Ovary (tissue), 10 donors: ENCODE measurements at regions of chr15 and their contacts with region 1.

Region 1: DNA sequence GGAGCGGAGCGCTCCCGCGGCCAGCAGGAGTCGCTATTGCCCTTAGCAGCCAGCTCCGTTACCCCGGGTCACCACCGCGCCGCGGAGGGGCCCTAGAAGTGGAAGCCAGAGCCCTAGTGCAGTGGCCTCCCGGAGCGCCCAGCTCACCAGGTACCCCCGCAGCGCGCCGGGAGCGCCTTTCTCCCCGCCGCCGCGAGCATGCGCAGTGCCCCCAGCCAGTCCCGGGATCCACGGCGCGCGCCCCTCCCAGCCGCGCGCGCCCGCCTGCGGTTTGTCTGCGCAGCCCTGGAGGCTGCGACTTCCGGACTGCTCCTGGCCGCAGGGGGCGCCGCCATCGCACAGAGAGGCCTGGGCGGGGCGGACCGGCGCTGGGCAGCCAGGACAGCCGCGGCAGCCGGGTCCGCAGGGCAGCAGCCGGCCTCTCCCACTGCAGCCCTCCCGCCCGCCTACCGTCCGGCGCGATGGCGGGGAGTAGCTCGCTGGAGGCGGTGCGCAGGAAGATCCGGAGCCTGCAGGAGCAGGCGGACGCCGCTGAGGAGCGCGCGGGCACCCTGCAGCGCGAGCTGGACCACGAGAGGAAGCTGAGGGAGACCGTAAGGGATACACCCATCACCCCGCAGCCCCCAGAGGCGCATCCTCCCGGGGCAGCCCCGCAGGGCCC is 5.7 kb downstream of the TPM1 start:
- DNase-seq: peak; percentile 93 to 97 (median 95)
- H3K4me3 ChIP-seq: peak overlapping the region; percentile 93
- H3K27ac ChIP-seq: peak overlapping the region; percentile 41 to 85
- H3K4me1 ChIP-seq: peaks cover 16% of the 10 kb centered on the region
- H3K27me3 ChIP-seq: no peaks in the 10 kb centered on the region
- CTCF ChIP-seq: peak; percentile 79 to 99 (median 98)
- EP300 ChIP-seq: no peak
- POLR2A ChIP-seq: peak; percentile 37

Region 2: GRCh38 chr15:62847900-62848489 is 200.2 kb before region 1 on chr15:
- intact Hi-C with region 1: loop called in 2 of 4 experiments (anchors 5 to 10 kb)
- DNase-seq: peak; percentile 69 to 81 (median 77)
- H3K4me3 ChIP-seq: no peak overlapping the region
- H3K27ac ChIP-seq: no peak overlapping the region
- H3K4me1 ChIP-seq: no peaks in the 10 kb centered on the region
- H3K27me3 ChIP-seq: no peaks in the 10 kb centered on the region
- CTCF ChIP-seq: peak in 2 of 3 donors; percentile 41 to 58
- EP300 ChIP-seq: no peak
- POLR2A ChIP-seq: no peak

Region 3: GRCh38 chr15:62879770-62880169 is 168.5 kb before region 1 on chr15:
- intact Hi-C with region 1: loop called in 1 of 4 experiments (anchors 10 kb)
- DNase-seq: no peak
- H3K4me3 ChIP-seq: no peak overlapping the region
- H3K27ac ChIP-seq: no peak overlapping the region
- H3K4me1 ChIP-seq: peaks cover 8% of the 10 kb centered on the region
- H3K27me3 ChIP-seq: no peaks in the 10 kb centered on the region
- CTCF ChIP-seq: no peak
- EP300 ChIP-seq: no peak
- POLR2A ChIP-seq: no peak

Region 4: DNA sequence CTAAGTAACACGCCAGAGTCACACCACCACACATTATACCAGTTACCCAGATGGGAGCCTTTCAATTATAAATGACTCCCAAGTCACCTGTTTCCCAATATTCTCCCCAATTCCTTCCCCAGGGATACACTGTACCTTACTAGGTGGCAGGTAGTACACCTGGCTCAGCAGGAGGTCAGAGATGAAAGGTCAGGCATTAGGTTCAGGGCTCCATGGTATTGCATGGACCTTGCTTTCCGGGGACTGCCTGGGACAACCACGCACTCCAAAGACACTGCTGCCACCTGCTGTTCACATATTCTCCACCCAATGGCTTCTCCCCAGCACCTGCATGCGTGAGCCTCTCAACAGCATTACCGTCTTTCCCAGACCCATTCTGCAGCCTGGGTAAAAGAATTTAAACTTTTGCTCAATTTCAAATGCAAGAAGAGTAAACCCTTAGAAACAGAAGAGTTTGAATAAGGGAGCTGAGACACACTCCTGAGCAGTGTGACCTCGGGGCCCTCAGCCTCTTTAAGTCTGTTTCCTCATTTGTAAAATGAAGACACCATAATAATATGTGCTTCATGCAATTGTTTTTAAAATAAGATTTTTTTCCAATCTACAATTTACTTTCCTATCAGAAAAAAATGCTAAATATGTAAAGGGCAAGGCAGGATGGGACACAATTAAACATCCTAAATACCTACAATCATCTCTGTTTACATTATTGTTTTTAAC is 45.4 kb after region 1 on chr15:
- intact Hi-C with region 1: loop called (anchors 5 kb)
- DNase-seq: peak; percentile 82 to 87 (median 86)
- H3K4me3 ChIP-seq: no peak overlapping the region
- H3K27ac ChIP-seq: no peak overlapping the region
- H3K4me1 ChIP-seq: no peaks in the 10 kb centered on the region
- H3K27me3 ChIP-seq: no peaks in the 10 kb centered on the region
- CTCF ChIP-seq: peak; percentile 71 to 91 (median 86)
- EP300 ChIP-seq: no peak
- POLR2A ChIP-seq: no peak

Region 5: DNA sequence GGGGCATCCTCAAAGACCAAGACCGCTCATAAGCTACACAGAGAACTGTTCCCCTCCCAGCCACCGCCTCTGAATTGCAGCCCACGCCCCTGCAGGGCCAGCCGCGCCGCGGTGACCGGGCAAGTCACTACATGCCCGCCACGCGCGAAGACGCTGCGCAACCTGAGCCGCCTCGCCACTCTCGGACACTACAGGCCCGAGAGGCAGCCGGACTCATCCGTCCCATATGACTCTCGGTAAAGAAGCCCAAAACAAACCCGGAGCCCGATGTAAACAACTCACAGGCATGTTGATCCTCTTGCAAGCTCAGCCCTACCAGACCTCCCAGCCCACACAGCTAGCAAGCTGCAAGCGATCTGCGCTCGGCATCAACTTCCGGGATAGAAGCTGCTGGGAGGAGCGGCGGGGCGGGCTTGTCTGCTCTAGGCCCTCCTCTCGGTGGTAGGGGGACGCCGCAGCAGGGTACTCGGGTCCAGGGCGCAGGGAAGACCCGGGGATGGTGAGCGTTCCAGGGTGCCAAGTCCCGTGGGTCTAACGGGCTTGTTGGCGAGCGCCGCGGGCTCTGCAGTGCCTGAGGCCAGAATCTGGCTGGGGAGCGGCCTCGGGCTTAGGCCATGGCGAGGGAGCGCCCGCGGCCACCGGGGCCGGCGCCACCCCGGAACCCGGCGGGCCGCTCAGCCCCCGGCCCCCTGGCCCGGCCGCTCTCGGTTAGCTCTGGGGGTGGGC is 109.0 kb after region 1 on chr15 and contains the start of gene RPS27L:
- intact Hi-C with region 1: loop called in 1 of 4 experiments (anchors 10 kb)
- DNase-seq: peak; percentile 88 to 91 (median 89)
- H3K4me3 ChIP-seq: peak within 1 kb of the TSS; percentile 97
- H3K27ac ChIP-seq: peak within 1 kb of the TSS; percentile 37 to 96
- H3K4me1 ChIP-seq: peaks cover 2% of the 10 kb centered on the region
- H3K27me3 ChIP-seq: no peaks in the 10 kb centered on the region
- CTCF ChIP-seq: peak in 1 of 3 donors; percentile 10
- EP300 ChIP-seq: no peak
- POLR2A ChIP-seq: peak; percentile 69
- total RNA-seq, gene RPS27L: 85.5 to 129 (median 95.0) TPM

Region 6: GRCh38 chr15:63473999-63474809 is 426.0 kb after region 1 on chr15:
- intact Hi-C with region 1: no loop called
- DNase-seq: peak in 1 of 5 donors; percentile 45
- H3K4me3 ChIP-seq: no peak overlapping the region
- H3K27ac ChIP-seq: no peak overlapping the region
- H3K4me1 ChIP-seq: peaks cover 3% of the 10 kb centered on the region
- H3K27me3 ChIP-seq: no peaks in the 10 kb centered on the region
- CTCF ChIP-seq: no peak
- EP300 ChIP-seq: no peak
- POLR2A ChIP-seq: no peak